ENCODE measurements at regions of chr4 and their contacts with region 1.

Region 1: GRCh38 chr4:70901984-70902576 is at the start of gene MOB1B:
- DNase-seq: peak; percentile 92
- H3K4me3 Mint-ChIP-seq: peak within 1 kb of the TSS; percentile 88
- H3K27ac Mint-ChIP-seq: peak within 1 kb of the TSS; percentile 73
- H3K4me1 Mint-ChIP-seq: peaks cover 20% of the 10 kb centered on the region
- H3K27me3 Mint-ChIP-seq: no peaks in the 10 kb centered on the region
- total RNA-seq, gene MOB1B: 18.6 to 19.9 TPM

Region 2: GRCh38 chr4:70601422-70602039 is 300.5 kb before region 1 on chr4:
- CTCF ChIA-PET with region 1: no interaction called
- POLR2A ChIA-PET with region 1: no interaction called
- intact Hi-C with region 1: loop called (anchors 5 kb)
- DNase-seq: peak; percentile 74
- H3K4me3 Mint-ChIP-seq: no peak overlapping the region
- H3K27ac Mint-ChIP-seq: no peak overlapping the region
- H3K4me1 Mint-ChIP-seq: no peaks in the 10 kb centered on the region
- H3K27me3 Mint-ChIP-seq: peaks cover 4% of the 10 kb centered on the region

Region 3: GRCh38 chr4:70734168-70734954 is 167.7 kb before region 1 on chr4:
- CTCF ChIA-PET with region 1: interaction called, 10 read pairs
- POLR2A ChIA-PET with region 1: no interaction called
- intact Hi-C with region 1: loop called (anchors 5 kb)
- DNase-seq: peak; percentile 40
- H3K4me3 Mint-ChIP-seq: peak overlapping the region; percentile 60
- H3K27ac Mint-ChIP-seq: peak overlapping the region; percentile 72
- H3K4me1 Mint-ChIP-seq: peaks cover 32% of the 10 kb centered on the region
- H3K27me3 Mint-ChIP-seq: no peaks in the 10 kb centered on the region

Region 4: GRCh38 chr4:70863099-70863790 is 38.8 kb before region 1 on chr4:
- CTCF ChIA-PET with region 1: no interaction called
- POLR2A ChIA-PET with region 1: no interaction called
- intact Hi-C with region 1: loop called (anchors 1 kb)
- DNase-seq: peak; percentile 39
- H3K4me3 Mint-ChIP-seq: no peak overlapping the region
- H3K27ac Mint-ChIP-seq: peak overlapping the region; percentile 57
- H3K4me1 Mint-ChIP-seq: peaks cover 12% of the 10 kb centered on the region
- H3K27me3 Mint-ChIP-seq: no peaks in the 10 kb centered on the region

Region 5: DNA sequence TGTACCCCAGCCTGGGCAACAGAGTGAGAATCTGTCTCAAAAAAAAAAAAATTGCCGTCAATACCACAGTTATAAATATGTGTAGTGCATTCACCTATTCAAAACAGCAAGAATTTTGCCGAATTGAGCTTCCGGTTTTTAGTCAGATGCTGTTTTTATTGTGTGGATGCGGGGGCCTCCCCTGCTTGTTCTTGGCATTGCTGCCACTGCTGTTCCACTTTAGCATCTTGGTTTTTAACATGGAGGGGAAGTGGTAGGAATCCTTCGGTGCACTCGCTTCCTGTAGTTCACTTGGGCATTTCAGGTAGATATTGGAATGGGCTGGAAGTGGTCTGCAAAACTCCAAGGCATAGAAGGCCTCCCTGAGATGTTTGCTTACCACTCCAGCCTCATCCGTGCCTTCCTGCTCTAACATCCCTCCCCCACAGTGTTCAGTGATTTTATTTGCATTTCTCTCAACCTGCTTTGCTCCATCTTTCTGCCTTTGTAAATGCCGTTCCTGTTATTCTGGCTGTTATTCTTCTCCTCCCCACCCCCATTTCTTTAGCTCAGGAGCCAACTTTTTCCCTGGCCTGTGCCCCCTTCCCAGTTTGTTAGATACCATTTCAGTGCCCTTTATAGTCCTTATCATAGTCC is 25.5 kb after region 1 on chr4:
- CTCF ChIA-PET with region 1: no interaction called
- POLR2A ChIA-PET with region 1: no interaction called
- intact Hi-C with region 1: loop called (anchors 2 kb)
- DNase-seq: peak; percentile 60
- H3K4me3 Mint-ChIP-seq: no peak overlapping the region
- H3K27ac Mint-ChIP-seq: no peak overlapping the region
- H3K4me1 Mint-ChIP-seq: peaks cover 31% of the 10 kb centered on the region
- H3K27me3 Mint-ChIP-seq: no peaks in the 10 kb centered on the region

Region 6: GRCh38 chr4:70958681-70959080 is 56.6 kb after region 1 on chr4:
- CTCF ChIA-PET with region 1: no interaction called
- POLR2A ChIA-PET with region 1: no interaction called
- intact Hi-C with region 1: no loop called
- DNase-seq: no peak
- H3K4me3 Mint-ChIP-seq: no peak overlapping the region
- H3K27ac Mint-ChIP-seq: no peak overlapping the region
- H3K4me1 Mint-ChIP-seq: no peaks in the 10 kb centered on the region
- H3K27me3 Mint-ChIP-seq: no peaks in the 10 kb centered on the region

Region 7: GRCh38 chr4:70993181-70994068 is 91.3 kb after region 1 on chr4 and contains the start of gene DCK:
- CTCF ChIA-PET with region 1: interaction called, 5 read pairs
- POLR2A ChIA-PET with region 1: no interaction called
- intact Hi-C with region 1: loop called (anchors 1 kb)
- DNase-seq: peak; percentile 91
- H3K4me3 Mint-ChIP-seq: peak within 1 kb of the TSS; percentile 91
- H3K27ac Mint-ChIP-seq: peak within 1 kb of the TSS; percentile 83
- H3K4me1 Mint-ChIP-seq: peaks cover 35% of the 10 kb centered on the region
- H3K27me3 Mint-ChIP-seq: no peaks in the 10 kb centered on the region
- total RNA-seq, gene DCK: 37.0 to 37.2 TPM

Region 8: GRCh38 chr4:71009890-71010588 is 108.0 kb after region 1 on chr4:
- CTCF ChIA-PET with region 1: interaction called, 4 read pairs
- POLR2A ChIA-PET with region 1: no interaction called
- intact Hi-C with region 1: loop called (anchors 5 kb)
- DNase-seq: no peak
- H3K4me3 Mint-ChIP-seq: no peak overlapping the region
- H3K27ac Mint-ChIP-seq: peak overlapping the region; percentile 82
- H3K4me1 Mint-ChIP-seq: peaks cover 31% of the 10 kb centered on the region
- H3K27me3 Mint-ChIP-seq: no peaks in the 10 kb centered on the region

Measured in activated CD4-positive, alpha-beta memory T cell treated with anti-CD3 and anti-CD28 coated beads for 36 hours (primary cell).